ENCODE measurements at regions of chr12 and their contacts with region 1.

Region 1: DNA sequence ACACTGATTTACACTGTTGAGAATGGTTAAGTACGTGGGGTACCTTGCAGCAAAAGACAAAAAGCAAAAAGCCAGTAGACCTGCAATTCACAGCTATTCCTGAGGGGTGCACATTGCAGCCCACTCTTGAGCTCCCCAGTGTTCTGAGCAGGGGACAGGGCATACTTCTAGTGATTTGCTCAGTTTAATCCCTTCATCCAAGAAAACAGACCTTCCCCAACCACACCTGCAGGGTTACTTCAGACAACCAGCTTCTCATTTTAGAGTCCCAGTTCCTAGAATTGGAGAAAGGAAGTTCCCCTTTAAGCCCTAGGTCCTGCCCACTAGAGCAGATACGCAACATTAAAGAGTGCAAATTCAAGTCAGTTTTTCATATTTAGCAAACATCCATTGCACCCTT is 3.6 kb upstream of the WSB2 start:
- DNase-seq: peak in 3 of 10 donors; percentile 23 to 34 (median 26)
- ATAC-seq: peak; percentile 61 to 66
- H3K4me3 Mint-ChIP-seq: peak overlapping the region; percentile 64 to 82 (median 72)
- H3K27ac Mint-ChIP-seq: peak overlapping the region in 8 of 10 donors; percentile 32 to 93 (median 76)
- H3K4me1 Mint-ChIP-seq: peaks cover 29 to 52% (median 47%) of the 10 kb centered on the region in 4 donors
- H3K27me3 Mint-ChIP-seq: peaks cover 0 to 12% (median 0%) of the 10 kb centered on the region in 5 donors

Region 2: DNA sequence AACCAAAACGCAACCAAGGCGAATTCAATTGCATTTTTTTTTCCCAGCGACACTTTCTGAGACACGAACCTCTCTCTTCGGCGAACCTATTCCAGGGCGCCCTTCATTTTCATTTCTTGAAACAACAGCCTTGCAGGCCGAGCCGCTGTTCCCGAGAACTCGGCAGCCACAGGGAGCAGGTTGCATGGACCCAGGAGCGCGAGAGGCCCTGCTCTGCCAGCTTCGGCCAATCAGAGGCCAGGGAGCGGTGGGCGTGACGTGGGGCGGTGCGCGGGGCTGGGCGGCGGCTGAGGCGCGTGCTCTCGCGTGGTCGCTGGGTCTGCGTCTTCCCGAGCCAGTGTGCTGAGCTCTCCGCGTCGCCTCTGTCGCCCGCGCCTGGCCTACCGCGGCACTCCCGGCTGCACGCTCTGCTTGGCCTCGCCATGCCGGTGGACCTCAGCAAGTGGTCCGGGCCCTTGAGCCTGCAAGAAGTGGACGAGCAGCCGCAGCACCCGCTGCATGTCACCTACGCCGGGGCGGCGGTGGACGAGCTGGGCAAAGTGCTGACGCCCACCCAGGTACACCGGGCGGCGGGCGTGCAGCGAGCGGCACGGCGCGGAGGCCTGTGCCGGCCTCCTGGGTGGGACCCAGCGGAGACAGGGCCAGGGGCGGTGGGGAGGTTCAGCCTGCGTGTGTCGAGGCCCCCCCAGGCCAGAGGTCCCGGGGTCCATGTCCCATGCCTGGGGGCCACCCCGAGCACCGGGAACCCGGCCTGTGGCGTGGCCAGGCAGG is 71.4 kb after region 1 on chr12 and contains the start of gene PEBP1:
- POLR2A ChIA-PET with region 1: interaction called, 12 read pairs
- DNase-seq: peak; percentile 85 to 93 (median 91)
- ATAC-seq: peak; percentile 99
- H3K4me3 Mint-ChIP-seq: peak within 1 kb of the TSS; percentile 91 to 99 (median 98)
- H3K27ac Mint-ChIP-seq: peak within 1 kb of the TSS; percentile 80 to 98 (median 93)
- H3K4me1 Mint-ChIP-seq: peaks cover 9 to 44% (median 30%) of the 10 kb centered on the region in 4 donors
- H3K27me3 Mint-ChIP-seq: no peaks in the 10 kb centered on the region
- polyA plus RNA-seq, gene PEBP1: 290 to 344 (median 340) TPM